AG04450 (cell line): ENCODE measurements at regions of chr1 and their contacts with region 1.

Region 1: DNA sequence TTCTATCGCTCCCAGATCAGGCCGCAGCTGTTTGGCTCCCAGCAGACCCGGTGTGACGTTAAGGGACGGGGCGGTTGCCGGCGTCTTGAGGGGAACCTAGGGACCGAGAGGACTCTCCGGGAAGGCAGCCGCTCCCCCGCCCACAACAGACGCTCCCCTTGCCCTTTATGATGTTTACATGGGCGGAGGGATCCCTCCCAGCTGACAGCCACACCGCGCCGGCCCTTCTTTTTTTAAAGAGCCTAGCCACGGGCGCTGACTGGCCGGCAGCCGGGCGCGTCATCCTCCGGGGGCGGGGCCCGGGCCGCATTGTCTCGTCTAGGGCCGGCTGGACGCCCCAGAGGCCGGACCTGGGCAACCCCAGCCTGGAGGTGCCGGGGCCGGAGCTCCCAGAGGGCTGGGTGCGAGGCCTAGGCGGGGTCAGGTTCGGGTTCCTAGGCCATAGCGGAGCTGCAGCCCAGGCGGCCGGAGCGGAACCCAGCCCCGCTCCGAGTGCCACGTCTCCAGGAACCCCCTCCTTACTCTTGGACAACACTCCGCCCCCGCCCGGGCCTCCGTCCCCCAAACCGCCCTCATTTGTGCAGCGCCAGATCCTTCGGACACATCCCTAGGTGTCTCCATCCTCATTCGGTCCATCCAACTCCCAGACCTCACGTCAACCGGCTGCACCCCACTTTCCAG is at the start of gene PCAT6:
- DNase-seq: peak; percentile 87
- H3K4me3 ChIP-seq: peak within 1 kb of the TSS; percentile 92
- H3K27ac ChIP-seq: peak within 1 kb of the TSS; percentile 81
- H3K27me3 ChIP-seq: peaks cover 4% of the 10 kb centered on the region
- CTCF ChIP-seq: no peak
- polyA plus RNA-seq, gene PCAT6: 3.0 and 4.0 TPM in 2 replicates

Region 2: GRCh38 chr1:202692959-202693555 is 117.7 kb before region 1 on chr1:
- CTCF ChIA-PET with region 1: no interaction called
- POLR2A ChIA-PET with region 1: no interaction called
- DNase-seq: peak; percentile 34
- H3K4me3 ChIP-seq: no peak overlapping the region
- H3K27ac ChIP-seq: no peak overlapping the region
- H3K27me3 ChIP-seq: peaks cover 36% of the 10 kb centered on the region
- CTCF ChIP-seq: peak; percentile 30

Region 3: DNA sequence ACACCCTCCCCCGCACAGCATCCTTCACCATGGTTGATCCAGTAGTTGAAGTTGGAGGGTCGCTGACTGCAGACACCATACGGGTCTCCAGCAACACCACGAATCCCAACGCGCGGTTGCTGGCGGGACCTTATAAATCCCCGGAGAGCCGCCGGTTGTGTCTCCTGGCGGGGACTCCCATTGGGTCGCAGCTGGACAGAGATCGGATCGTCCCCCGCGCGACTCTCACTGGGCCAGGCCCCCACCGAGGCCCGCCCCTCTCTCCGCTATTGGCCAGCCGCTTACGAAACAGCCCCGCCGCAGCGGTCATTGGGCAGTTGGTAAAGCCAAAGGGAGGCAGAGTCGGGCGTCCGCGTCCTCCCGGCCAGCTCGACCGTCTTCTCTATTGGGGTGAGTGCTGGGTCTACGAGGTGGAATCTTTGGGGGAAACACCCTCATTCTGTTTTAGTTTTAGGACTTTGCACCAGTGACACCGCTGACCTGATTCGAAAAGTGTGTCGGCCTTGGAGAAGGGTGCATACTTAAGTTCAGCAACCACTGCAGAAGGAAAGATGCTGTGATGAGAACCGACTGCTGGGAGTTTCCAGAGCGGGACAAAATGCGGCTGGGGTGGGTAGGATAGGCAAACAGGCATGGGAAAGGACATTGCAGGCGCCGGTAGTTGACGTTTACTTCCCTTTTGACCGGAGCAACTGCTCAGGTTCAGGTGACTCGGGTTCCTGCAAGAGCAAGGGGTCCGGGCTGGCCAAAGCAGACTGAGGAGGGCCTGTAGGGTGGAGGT is 50.9 kb after region 1 on chr1:
- CTCF ChIA-PET with region 1: no interaction called
- POLR2A ChIA-PET with region 1: interaction called, 10 read pairs
- DNase-seq: peak; percentile 55
- H3K4me3 ChIP-seq: peak overlapping the region; percentile 74
- H3K27ac ChIP-seq: peak overlapping the region; percentile 11
- H3K27me3 ChIP-seq: peaks cover 8% of the 10 kb centered on the region
- CTCF ChIP-seq: no peak